Body of pancreas (tissue), 4 donors: ENCODE measurements at regions of chr7 and their contacts with region 1.

Region 1: DNA sequence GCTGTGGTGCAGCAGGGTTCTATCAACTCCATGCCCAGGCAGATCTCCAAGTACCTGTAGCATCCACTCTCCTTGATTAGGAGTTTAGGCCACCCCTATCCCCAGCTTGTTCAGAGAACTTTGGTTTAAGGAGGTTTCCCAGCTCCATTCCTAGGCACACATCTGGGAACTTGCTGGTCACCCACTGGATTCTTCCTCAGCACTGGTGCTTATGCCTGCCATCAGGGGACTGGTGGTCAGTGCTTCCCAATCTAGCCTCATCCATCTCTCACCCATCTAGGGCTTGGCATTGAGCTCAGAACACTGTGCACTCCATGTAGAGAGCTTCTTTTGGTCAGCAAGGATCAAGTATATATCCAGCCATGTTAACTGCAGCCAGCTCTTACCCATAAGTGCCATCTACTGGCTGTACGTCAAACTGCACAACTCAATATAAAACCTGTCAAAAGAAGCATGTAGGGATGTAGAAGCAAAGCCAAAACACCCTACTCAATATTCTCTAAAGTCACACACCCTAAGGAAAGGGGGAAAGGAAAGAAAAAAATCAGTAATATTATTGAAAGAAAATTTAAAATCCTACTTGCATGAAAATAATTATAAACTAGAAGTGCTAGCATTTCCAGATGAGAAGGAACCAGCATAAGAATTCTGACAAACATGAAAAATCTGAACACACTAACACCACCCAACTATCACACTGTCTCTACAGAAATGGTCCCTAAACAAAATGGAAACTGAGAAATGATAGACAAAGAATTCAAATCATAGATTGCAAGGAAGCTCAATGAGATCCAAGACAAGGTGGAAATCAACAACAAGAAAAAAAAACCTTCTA is 531.2 kb upstream of the STEAP1 start:
- DNase-seq: peak; percentile 30 to 58 (median 46)
- ATAC-seq: peak; percentile 79
- H3K4me3 ChIP-seq: no peak overlapping the region
- H3K27ac ChIP-seq: no peak overlapping the region
- H3K4me1 ChIP-seq: no peaks in the 10 kb centered on the region
- H3K27me3 ChIP-seq: no peaks in the 10 kb centered on the region
- CTCF ChIP-seq: peak; percentile 47 to 79 (median 74)
- POLR2A ChIP-seq: no peak

Region 2: GRCh38 chr7:88243345-88243909 is 1379.6 kb before region 1 on chr7:
- intact Hi-C with region 1: loop called (anchors 10 kb)
- DNase-seq: peak in 2 of 4 donors; percentile 22 to 46
- ATAC-seq: peak; percentile 92
- H3K4me3 ChIP-seq: no peak overlapping the region
- H3K27ac ChIP-seq: no peak overlapping the region
- H3K4me1 ChIP-seq: no peaks in the 10 kb centered on the region
- H3K27me3 ChIP-seq: no peaks in the 10 kb centered on the region
- CTCF ChIP-seq: peak; percentile 31 to 96 (median 85)
- POLR2A ChIP-seq: no peak